ENCODE measurements at regions of chr19 and their contacts with region 1.

Region 1: GRCh38 chr19:37564624-37565369 is 29.8 kb downstream of the ZNF571 start:
- DNase-seq: no peak
- H3K4me3 ChIP-seq: no peak overlapping the region
- H3K27ac ChIP-seq: no peak overlapping the region
- H3K4me1 ChIP-seq: no peaks in the 10 kb centered on the region
- H3K27me3 ChIP-seq: no peaks in the 10 kb centered on the region
- CTCF ChIP-seq: no peak
- EP300 ChIP-seq: no peak
- POLR2A ChIP-seq: no peak

Region 2: DNA sequence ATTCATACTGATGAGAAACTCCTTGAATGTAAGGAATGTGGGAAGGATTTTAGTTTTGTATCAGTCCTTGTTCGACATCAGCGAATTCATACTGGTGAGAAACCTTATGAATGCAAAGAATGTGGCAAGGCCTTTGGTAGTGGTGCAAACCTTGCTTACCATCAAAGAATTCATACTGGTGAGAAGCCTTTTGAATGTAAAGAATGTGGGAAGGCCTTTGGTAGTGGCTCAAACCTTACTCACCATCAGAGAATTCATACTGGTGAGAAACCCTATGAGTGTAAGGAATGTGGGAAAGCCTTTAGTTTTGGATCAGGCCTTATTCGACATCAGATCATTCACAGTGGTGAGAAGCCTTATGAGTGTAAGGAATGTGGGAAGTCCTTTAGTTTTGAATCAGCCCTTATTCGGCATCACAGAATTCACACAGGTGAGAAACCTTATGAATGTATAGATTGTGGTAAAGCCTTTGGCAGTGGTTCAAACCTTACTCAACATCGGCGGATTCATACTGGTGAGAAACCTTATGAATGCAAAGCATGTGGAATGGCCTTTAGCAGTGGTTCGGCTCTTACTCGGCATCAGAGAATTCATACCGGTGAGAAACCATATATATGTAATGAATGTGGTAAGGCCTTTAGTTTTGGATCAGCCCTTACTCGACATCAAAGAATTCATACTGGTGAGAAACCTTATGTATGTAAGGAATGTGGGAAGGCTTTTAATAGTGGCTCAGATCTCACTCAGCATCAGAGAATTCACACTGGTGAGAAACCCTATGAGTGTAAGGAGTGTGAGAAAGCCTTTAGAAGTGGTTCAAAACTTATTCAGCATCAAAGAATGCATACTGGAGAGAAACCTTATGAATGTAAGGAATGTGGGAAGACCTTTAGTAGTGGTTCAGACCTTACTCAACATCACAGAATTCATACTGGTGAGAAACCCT is 687.5 kb before region 1 on chr19:
- intact Hi-C with region 1: loop called (anchors 10 kb)
- DNase-seq: no peak
- H3K4me3 ChIP-seq: peak overlapping the region in 1 of 4 donors; percentile 1
- H3K27ac ChIP-seq: no peak overlapping the region
- H3K4me1 ChIP-seq: no peaks in the 10 kb centered on the region
- H3K27me3 ChIP-seq: no peaks in the 10 kb centered on the region
- CTCF ChIP-seq: no peak
- EP300 ChIP-seq: no peak
- POLR2A ChIP-seq: no peak

Region 3: DNA sequence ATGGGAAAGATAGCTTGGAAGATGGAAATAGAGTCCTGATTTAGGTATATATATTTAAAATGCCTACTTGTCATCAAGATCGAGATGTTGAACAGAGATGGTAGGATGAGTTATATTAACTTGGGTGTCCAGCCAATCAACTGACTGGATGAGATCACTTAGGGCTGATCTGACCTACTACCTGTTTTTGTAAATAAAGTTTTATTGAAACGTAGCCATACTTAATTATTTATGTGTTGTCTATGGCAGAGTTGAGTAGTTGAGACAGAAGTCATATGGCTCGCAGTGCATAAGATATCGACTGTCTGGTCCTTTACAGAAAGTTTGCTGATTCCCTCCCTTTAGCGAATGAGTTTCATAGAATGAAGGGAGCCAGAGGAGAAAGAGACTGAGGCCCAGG is 37.4 kb after region 1 on chr19:
- intact Hi-C with region 1: no loop called
- DNase-seq: no peak
- H3K4me3 ChIP-seq: no peak overlapping the region
- H3K27ac ChIP-seq: no peak overlapping the region
- H3K4me1 ChIP-seq: no peaks in the 10 kb centered on the region
- H3K27me3 ChIP-seq: no peaks in the 10 kb centered on the region
- CTCF ChIP-seq: no peak
- EP300 ChIP-seq: no peak
- POLR2A ChIP-seq: no peak